Activated naive CD4-positive, alpha-beta T cell treated with anti-CD3 and anti-CD28 coated beads for 36 hours (primary cell): ENCODE measurements at regions of chr14 and their contacts with region 1.

Region 1: GRCh38 chr14:61321385-61322010 is at the start of gene PRKCH:
- DNase-seq: peak; percentile 91
- H3K4me3 Mint-ChIP-seq: peak within 1 kb of the TSS; percentile 99
- H3K27ac Mint-ChIP-seq: peak within 1 kb of the TSS; percentile 95
- H3K4me1 Mint-ChIP-seq: peaks cover 25% of the 10 kb centered on the region
- H3K27me3 Mint-ChIP-seq: no peaks in the 10 kb centered on the region
- total RNA-seq, gene PRKCH: 149 to 158 TPM

Region 2: DNA sequence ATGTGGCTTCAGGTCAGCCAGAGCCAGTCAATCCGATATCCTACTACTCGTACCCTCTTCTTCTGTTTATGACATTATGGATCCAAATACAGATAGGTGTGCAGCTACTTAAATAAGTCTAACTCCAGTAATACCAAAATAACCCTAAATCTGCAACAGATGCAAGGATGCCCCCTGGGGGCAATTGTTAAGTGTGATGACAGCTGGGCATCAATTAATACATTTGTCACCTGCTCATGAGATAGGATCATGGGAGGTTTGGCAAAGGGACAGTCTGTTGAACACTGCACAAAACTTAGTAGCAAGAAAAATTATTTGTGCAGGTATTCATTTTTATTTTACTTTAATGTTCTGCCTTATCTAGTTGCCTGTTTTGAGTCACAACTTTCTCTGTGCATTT is 257.3 kb before region 1 on chr14:
- CTCF ChIA-PET with region 1: no interaction called
- intact Hi-C with region 1: no loop called
- DNase-seq: no peak
- H3K4me3 Mint-ChIP-seq: no peak overlapping the region
- H3K27ac Mint-ChIP-seq: no peak overlapping the region
- H3K4me1 Mint-ChIP-seq: no peaks in the 10 kb centered on the region
- H3K27me3 Mint-ChIP-seq: no peaks in the 10 kb centered on the region

Region 3: GRCh38 chr14:61147831-61148549 is 173.5 kb before region 1 on chr14:
- CTCF ChIA-PET with region 1: no interaction called
- intact Hi-C with region 1: no loop called
- DNase-seq: no peak
- H3K4me3 Mint-ChIP-seq: no peak overlapping the region
- H3K27ac Mint-ChIP-seq: no peak overlapping the region
- H3K4me1 Mint-ChIP-seq: peaks cover 4% of the 10 kb centered on the region
- H3K27me3 Mint-ChIP-seq: peaks cover 5% of the 10 kb centered on the region

Region 4: DNA sequence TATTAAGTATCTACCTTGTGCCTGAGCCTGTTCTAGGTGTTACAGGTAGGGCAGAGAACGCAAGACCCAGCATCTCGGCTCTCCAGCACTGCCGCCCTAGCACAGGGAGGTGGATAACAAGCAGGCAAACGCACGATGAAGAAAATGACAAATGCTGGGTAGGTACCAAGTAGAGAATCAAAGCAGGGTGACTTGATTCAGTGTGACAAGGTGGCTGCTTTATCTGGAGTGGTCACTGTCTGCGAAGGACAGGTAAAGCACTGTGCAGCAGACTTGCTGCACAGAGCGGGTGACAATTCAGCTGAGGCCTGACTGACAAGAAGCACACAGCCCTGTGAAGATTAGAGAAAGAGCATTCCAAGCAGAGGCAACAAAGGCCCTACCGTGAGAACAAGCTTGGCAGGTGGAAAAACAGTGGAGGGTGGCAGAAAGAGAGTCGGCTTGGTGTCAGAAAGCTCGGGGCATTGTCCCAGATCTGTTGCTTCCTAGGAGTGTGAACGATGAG is 12.8 kb after region 1 on chr14:
- CTCF ChIA-PET with region 1: interaction called, 4 read pairs
- intact Hi-C with region 1: loop called (anchors 1 kb)
- DNase-seq: peak; percentile 51
- H3K4me3 Mint-ChIP-seq: peak overlapping the region; percentile 72
- H3K27ac Mint-ChIP-seq: peak overlapping the region; percentile 95
- H3K4me1 Mint-ChIP-seq: peaks cover 85% of the 10 kb centered on the region
- H3K27me3 Mint-ChIP-seq: no peaks in the 10 kb centered on the region

Region 5: DNA sequence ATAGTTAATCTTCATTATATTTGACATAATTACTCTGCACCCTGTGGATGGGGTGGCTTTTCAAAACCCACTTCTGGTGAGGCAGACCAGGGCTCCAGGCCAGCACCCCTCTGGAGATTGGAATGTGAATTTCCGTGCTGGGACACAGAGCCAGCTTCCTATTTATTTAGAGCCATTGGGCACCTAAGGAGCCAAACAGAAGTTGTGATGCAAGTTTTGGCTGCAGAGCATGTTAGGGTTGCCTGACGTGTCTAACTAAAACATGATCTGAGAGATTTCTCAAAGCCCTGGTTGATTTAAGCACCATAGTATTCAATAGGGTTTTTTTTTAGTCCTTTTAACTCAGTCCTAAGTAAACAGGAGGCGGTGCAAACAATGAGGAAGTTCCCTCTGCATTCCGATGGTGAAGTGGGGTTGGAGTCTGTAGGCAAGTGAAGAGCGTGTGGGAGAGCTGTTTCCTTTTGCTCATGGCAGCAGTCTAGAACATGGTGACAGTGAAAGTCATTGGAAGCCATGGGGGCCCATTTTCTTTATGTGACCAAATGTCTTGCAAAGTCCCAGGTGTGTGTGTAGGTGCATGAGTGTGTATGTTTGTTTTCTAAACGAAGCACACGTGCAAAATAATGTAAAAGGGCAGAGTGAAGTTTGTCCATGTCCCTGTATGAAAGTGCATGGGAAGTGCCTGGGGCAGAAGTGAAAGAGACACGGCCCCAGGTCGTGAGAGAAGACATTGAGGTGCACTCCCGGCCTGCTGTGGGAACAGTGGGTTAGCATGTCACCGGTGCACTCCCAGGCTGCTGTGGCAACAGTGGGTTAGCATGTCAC is 117.6 kb after region 1 on chr14:
- CTCF ChIA-PET with region 1: no interaction called
- intact Hi-C with region 1: loop called (anchors 1 kb)
- DNase-seq: peak; percentile 60
- H3K4me3 Mint-ChIP-seq: peak overlapping the region; percentile 63
- H3K27ac Mint-ChIP-seq: peak overlapping the region; percentile 84
- H3K4me1 Mint-ChIP-seq: peaks cover 93% of the 10 kb centered on the region
- H3K27me3 Mint-ChIP-seq: no peaks in the 10 kb centered on the region

Region 6: DNA sequence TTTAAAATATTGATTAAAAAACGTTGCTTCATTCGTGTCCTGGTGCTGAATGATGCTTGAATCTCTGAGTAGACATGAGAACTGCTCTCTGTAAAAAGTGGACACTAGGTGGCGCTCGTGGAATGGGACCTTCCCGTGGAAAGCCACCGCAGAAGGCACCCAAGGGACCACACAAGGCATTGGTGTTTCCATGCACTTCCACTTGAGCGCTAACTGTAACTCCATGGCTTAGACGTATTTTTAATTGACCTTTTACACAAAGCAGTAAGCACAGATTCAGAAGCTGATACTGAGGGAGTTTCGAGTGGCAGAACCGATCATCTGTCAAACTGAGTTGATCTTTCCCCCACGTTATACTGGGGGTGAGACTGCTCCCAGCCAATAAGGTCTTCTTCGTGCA is 135.2 kb after region 1 on chr14:
- CTCF ChIA-PET with region 1: no interaction called
- intact Hi-C with region 1: loop called (anchors 1 kb)
- DNase-seq: peak; percentile 94
- H3K4me3 Mint-ChIP-seq: no peak overlapping the region
- H3K27ac Mint-ChIP-seq: peak overlapping the region; percentile 66
- H3K4me1 Mint-ChIP-seq: peaks cover 82% of the 10 kb centered on the region
- H3K27me3 Mint-ChIP-seq: no peaks in the 10 kb centered on the region

Region 7: DNA sequence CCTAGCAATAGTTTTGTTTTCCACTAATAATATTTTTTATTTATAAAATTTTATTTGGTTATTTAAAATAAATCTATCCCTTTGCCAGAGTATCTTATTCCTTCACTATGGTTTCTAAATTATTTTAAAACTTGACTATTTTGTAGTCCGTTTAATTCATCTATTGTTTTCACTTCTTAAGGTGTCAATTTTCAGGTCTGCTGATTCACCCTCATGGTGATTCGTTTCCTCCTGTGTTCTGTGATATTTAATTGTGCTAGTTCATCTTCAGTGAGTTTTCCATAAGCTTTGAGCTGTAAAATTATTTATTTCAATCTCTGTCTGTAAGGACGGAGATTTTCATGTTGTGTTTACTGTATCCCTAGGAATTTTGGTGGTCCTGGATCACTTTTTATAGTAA is 511.3 kb after region 1 on chr14:
- CTCF ChIA-PET with region 1: no interaction called
- intact Hi-C with region 1: no loop called
- DNase-seq: peak; percentile 25
- H3K4me3 Mint-ChIP-seq: no peak overlapping the region
- H3K27ac Mint-ChIP-seq: no peak overlapping the region
- H3K4me1 Mint-ChIP-seq: peaks cover 9% of the 10 kb centered on the region
- H3K27me3 Mint-ChIP-seq: no peaks in the 10 kb centered on the region